Activated CD8-positive, alpha-beta T cell treated with anti-CD3 and anti-CD28 coated beads, Interleukin-2, amount 10 ng/mL, durations not matched to agents 7 days and 5 days (primary cell): ENCODE measurements at regions of chr19 and their contacts with region 1.

Region 1: DNA sequence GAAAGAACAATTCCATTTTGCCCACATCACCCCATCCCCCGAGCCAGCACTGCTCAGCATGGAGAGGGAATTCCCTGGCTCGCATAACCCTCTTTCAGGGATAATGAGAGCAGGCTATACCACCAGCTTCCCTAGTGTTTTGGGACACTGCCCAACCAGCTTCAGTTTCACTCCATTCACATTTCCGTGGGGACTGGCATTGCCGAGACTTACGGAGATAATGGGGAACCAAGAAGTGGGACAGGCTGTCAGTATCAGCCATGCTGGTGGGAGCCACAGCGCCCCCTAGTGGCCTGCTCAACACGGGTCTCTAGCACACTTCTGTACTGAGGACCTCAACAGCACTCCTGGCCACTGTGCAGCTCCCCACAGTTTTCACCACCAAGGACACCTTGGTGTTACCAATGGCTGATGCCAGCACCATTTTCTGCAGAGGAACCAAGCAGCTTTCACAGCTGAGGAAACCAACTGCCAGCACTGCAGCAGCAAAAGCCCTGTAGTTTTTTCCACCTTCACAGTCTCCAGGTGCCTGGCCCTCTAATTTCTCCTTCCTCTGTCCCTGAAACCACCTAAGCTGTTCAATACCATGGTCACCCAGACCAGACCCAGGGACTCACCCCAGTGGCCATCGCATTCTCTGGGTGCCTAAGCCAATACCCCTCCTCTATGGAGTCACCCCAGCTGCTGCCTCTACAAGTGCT is 23.7 kb downstream of the SLC6A16 start:
- DNase-seq: peak; percentile 87
- ATAC-seq: peak; percentile 100
- H3K4me3 Mint-ChIP-seq: no peak overlapping the region
- H3K27ac Mint-ChIP-seq: no peak overlapping the region
- H3K4me1 Mint-ChIP-seq: peaks cover 1% of the 10 kb centered on the region
- H3K27me3 Mint-ChIP-seq: no peaks in the 10 kb centered on the region

Region 2: GRCh38 chr19:49244256-49244655 is 57.1 kb before region 1 on chr19:
- CTCF ChIA-PET with region 1: no interaction called
- POLR2A ChIA-PET with region 1: no interaction called
- DNase-seq: no peak
- ATAC-seq: no peak
- H3K4me3 Mint-ChIP-seq: no peak overlapping the region
- H3K27ac Mint-ChIP-seq: no peak overlapping the region
- H3K4me1 Mint-ChIP-seq: no peaks in the 10 kb centered on the region
- H3K27me3 Mint-ChIP-seq: peaks cover 5% of the 10 kb centered on the region

Region 3: DNA sequence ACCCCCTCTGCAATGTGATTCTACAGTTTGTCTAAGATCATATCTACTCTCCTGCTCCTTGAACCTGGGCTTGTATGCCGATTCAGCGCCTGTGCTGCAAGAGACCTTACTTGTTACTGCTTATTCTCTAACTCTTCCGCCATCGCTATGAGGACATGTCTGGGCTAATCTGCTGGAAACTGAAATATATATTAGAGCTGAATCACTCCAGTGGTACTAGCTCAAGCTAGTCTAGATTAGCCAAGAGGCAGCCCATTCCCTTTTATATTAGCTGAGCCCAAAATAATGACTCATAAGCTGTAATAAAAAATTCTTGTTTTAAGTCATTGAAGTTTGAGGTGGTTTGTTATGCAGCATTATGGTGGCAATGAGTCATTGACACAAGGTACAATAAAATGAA is 29.1 kb before region 1 on chr19:
- CTCF ChIA-PET with region 1: interaction called, 11 read pairs
- POLR2A ChIA-PET with region 1: no interaction called
- DNase-seq: no peak
- ATAC-seq: no peak
- H3K4me3 Mint-ChIP-seq: no peak overlapping the region
- H3K27ac Mint-ChIP-seq: no peak overlapping the region
- H3K4me1 Mint-ChIP-seq: no peaks in the 10 kb centered on the region
- H3K27me3 Mint-ChIP-seq: peaks cover 24% of the 10 kb centered on the region

Region 4: DNA sequence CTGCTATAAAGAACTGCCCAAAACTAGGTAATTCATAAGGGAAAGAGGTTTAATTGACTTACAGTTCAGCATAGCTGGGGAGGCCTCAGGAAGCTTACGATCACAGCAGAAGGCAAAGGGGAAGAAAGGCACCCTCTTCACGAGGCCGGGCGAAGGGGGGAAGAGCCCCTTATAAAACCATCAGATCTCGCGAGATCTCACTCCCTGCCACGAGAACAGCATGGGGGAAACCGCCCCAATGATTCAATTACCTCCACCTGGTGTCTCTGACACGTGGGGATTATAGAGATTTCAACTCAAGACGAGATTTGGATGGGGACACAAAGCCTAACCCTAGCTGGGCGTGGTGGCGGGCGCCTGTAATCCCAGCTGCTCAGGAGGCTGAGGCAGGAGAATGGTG is 19.1 kb before region 1 on chr19:
- CTCF ChIA-PET with region 1: interaction called, 12 read pairs
- POLR2A ChIA-PET with region 1: no interaction called
- DNase-seq: no peak
- ATAC-seq: no peak
- H3K4me3 Mint-ChIP-seq: no peak overlapping the region
- H3K27ac Mint-ChIP-seq: no peak overlapping the region
- H3K4me1 Mint-ChIP-seq: no peaks in the 10 kb centered on the region
- H3K27me3 Mint-ChIP-seq: peaks cover 5% of the 10 kb centered on the region

Region 5: GRCh38 chr19:49327878-49328544 is 26.7 kb after region 1 on chr19:
- CTCF ChIA-PET with region 1: interaction called, 19 read pairs
- POLR2A ChIA-PET with region 1: no interaction called
- DNase-seq: peak; percentile 64
- ATAC-seq: peak; percentile 37
- H3K4me3 Mint-ChIP-seq: no peak overlapping the region
- H3K27ac Mint-ChIP-seq: no peak overlapping the region
- H3K4me1 Mint-ChIP-seq: peaks cover 52% of the 10 kb centered on the region
- H3K27me3 Mint-ChIP-seq: no peaks in the 10 kb centered on the region

Region 6: DNA sequence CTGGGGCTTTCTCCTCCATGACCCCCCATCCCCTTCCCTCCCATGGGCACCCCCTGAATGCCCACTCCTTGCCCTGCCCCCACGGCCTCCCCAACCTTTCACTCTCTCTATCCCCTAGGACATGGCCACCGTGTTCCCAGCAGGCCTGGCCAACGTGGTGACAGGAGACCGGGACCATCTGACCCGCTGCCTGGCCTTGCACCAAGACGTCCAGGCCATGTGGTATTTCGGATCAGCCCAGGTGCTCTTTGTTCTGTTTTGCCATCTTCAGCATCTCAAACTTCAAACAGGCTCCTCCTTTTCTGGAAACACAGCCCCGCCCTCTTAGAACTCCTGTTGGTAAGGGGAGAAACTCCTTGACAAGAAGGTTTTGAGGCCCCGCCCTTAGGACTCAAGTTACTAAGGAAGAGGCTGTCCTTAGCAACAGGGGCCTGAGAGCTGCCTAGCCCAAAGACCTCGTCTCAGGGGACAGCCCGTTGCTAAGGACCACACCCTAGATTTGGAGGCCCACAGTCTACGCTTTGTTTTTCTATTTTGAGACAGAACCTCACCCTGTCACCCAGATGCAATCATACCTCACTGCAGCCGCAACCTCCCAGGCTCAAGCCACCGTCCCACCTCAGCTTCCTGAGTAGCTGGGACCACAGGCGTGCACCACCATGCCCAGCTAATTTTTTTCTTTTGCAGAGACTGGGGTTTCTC is 167.6 kb after region 1 on chr19:
- CTCF ChIA-PET with region 1: interaction called, 13 read pairs
- POLR2A ChIA-PET with region 1: no interaction called
- DNase-seq: peak; percentile 96
- ATAC-seq: peak; percentile 80
- H3K4me3 Mint-ChIP-seq: peak overlapping the region; percentile 70
- H3K27ac Mint-ChIP-seq: peak overlapping the region; percentile 99
- H3K4me1 Mint-ChIP-seq: peaks cover 56% of the 10 kb centered on the region
- H3K27me3 Mint-ChIP-seq: no peaks in the 10 kb centered on the region